ENCODE measurements at regions of chr5 and their contacts with region 1.

Region 1: DNA sequence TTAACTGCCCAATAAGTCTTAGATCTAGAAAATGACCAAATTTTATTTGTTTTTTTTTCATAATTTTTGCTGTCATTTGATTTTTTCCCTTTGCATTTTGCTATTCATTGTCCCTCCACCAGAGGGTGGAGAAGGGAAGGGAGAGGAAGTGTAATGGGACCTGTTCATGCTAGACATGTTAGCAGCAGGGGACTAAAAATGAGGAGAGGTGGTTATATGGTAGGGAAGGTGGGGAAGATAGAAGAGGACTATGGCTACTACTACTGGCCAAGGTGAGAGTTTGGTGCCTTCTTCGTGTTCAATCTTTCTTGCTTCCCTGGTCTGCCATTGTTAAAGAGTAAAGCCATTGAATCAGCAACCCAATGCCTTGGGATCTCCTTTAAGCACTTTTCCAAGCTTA is 6.4 kb downstream of the GRIA1 start:
- DNase-seq: peak; percentile 69
- H3K4me3 ChIP-seq: no peak overlapping the region
- H3K27ac ChIP-seq: no peak overlapping the region
- H3K4me1 ChIP-seq: no peaks in the 10 kb centered on the region
- H3K27me3 ChIP-seq: peaks cover 7% of the 10 kb centered on the region in 2 experiments
- CTCF ChIP-seq: peak; percentile 50 to 66
- POLR2A ChIP-seq: no peak

Region 2: GRCh38 chr5:152532714-152533113 is 964.1 kb before region 1 on chr5:
- CTCF ChIA-PET with region 1: no interaction called
- POLR2A ChIA-PET with region 1: no interaction called
- dilution Hi-C with region 1: no loop called
- intact Hi-C with region 1: loop called (anchors 1 kb)
- DNase-seq: peak; percentile 47
- H3K4me3 ChIP-seq: no peak overlapping the region
- H3K27ac ChIP-seq: no peak overlapping the region
- H3K4me1 ChIP-seq: no peaks in the 10 kb centered on the region
- H3K27me3 ChIP-seq: no peaks in the 10 kb centered on the region
- CTCF ChIP-seq: peak in 1 of 2 donors; percentile 5
- POLR2A ChIP-seq: no peak

Region 3: DNA sequence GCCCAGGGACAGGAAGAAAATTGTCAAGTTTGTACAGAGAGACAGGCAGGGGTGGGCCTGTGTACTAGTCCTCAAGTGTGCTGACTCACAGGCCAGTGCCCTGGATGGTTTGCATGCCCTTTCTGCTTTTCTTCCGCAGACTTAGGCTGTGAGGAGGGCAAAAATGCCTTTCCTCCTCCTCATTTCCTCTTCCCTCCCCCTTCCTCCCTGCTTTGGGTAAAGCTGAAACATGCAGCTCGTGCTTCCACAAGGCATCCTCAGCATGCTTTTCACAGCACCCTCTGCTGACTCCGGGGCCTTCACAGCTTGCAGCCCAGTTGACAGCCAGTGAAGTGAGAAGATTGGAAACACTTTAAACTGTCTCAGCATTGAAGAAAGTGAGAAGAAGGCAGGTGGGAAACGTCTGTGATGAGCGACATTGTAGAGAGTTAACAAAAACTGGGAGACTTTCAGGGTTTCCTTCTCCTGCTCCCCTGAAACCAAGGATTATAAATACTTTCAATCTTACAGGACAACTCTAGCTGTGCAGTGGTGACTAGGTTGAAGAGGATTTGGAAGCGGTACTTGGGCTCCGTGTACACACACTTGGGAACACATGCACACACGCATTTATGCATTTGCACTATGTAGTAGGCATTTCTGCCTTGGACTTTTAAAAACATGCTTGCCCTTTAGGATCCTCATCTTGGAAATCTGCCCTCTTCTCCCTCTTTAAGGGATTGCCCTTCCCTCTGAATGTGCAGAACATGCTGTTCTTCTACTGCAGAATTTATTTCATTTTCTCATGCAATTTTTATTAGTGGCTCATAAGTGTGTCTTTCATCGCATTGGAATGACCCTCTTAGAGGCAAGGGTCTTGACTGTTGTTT is 132.4 kb after region 1 on chr5:
- CTCF ChIA-PET with region 1: interaction called, 22 read pairs
- POLR2A ChIA-PET with region 1: no interaction called
- dilution Hi-C with region 1: no loop called
- intact Hi-C with region 1: loop called (anchors 1 kb)
- DNase-seq: peak; percentile 92
- H3K4me3 ChIP-seq: no peak overlapping the region
- H3K27ac ChIP-seq: peak overlapping the region; percentile 62
- H3K4me1 ChIP-seq: peaks cover 21% of the 10 kb centered on the region
- H3K27me3 ChIP-seq: no peaks in the 10 kb centered on the region
- CTCF ChIP-seq: peak; percentile 38 to 48
- POLR2A ChIP-seq: no peak

Region 4: DNA sequence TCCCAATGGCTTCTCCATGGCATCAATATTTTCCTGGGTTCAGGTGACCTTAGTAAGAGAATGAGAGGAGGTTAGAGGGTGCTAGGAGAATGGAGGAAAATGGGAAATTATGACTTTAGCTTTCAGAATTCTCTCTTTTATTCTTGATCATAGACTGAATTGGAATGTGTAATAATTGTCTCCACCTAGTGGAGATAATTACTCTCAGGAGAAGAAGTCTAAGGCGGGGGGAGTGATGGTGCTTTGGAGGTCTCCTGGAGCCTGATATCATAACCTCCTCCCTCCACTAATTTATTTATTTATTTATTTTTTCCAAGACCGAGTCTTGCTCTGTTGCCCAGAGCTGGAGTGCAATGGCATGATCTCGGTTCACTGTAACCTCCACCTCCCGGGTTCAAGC is 214.9 kb after region 1 on chr5:
- CTCF ChIA-PET with region 1: interaction called, 115 read pairs
- POLR2A ChIA-PET with region 1: no interaction called
- dilution Hi-C with region 1: no loop called
- intact Hi-C with region 1: loop called (anchors 1 kb)
- DNase-seq: peak; percentile 7
- H3K4me3 ChIP-seq: no peak overlapping the region
- H3K27ac ChIP-seq: no peak overlapping the region
- H3K4me1 ChIP-seq: no peaks in the 10 kb centered on the region
- H3K27me3 ChIP-seq: no peaks in the 10 kb centered on the region
- CTCF ChIP-seq: peak in 1 of 2 donors; percentile 15
- POLR2A ChIP-seq: no peak

Region 5: GRCh38 chr5:153756540-153756939 is 259.7 kb after region 1 on chr5:
- CTCF ChIA-PET with region 1: no interaction called
- POLR2A ChIA-PET with region 1: no interaction called
- dilution Hi-C with region 1: no loop called
- intact Hi-C with region 1: loop called (anchors 5 kb)
- DNase-seq: no peak
- H3K4me3 ChIP-seq: no peak overlapping the region
- H3K27ac ChIP-seq: no peak overlapping the region
- H3K4me1 ChIP-seq: no peaks in the 10 kb centered on the region
- H3K27me3 ChIP-seq: no peaks in the 10 kb centered on the region
- CTCF ChIP-seq: no peak
- POLR2A ChIP-seq: no peak

Measured in endothelial cell of umbilical vein (primary cell).